Activated CD8-positive, alpha-beta memory T cell treated with anti-CD3 and anti-CD28 coated beads, Interleukin-2, amount 10 ng/mL, durations not matched to agents 7 days and 5 days (primary cell): ENCODE measurements at regions of chr17 and their contacts with region 1.

Region 1: GRCh38 chr17:75012346-75013091 is at the start of gene MRPL58:
- DNase-seq: peak; percentile 92
- ATAC-seq: peak; percentile 95
- H3K4me3 Mint-ChIP-seq: peak within 1 kb of the TSS; percentile 95
- H3K27ac Mint-ChIP-seq: peak within 1 kb of the TSS; percentile 93
- H3K4me1 Mint-ChIP-seq: peaks cover 24% of the 10 kb centered on the region
- H3K27me3 Mint-ChIP-seq: peaks cover 2% of the 10 kb centered on the region
- total RNA-seq, gene MRPL58: 45.9 to 53.1 TPM

Region 2: DNA sequence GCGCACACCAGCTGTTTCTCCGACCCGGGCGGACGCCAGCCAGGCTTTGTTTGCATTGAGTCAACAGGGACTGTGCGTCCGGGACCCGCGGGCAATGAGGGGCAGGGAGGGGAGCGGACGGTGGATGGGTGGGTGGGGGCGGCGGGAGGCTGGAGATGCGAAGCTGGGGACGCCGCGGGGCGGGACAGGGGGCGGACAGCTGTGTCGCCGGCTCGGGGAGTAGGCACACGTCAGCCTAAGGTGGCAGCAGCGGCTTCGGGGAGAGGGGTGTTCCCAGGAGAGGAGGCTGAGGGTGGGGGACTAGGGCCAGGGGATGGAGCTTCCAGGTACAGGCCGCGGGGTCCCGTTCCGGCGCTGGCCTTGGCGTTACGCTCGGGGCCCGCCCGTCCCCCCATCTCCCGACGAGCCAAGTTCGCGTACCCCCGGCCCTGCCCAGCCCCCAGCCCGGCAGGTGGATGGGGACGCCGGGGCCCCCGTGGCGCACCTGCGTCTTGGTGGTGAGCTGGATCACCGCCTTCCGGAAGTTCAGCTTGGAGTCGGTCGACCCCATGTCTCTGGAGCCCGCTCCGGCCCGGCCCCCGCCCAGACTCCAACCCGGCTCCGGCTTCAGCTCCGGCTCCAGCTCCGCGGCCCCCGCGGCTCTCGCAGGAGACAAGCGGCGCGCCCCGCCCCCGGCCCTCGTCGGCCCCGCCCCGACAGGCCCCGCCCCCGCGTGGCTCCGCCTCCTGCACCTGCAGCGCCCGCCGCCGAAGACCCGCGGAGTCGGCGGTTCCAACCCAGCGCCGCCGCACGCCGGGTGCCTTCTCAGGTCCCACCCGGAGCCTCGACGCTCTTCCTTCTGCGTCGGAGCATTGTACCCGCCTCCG is 40.2 kb before region 1 on chr17 and contains the start of gene HID1:
- CTCF ChIA-PET with region 1: interaction called, 15 read pairs
- DNase-seq: peak; percentile 75
- ATAC-seq: peak; percentile 93
- H3K4me3 Mint-ChIP-seq: peak within 1 kb of the TSS; percentile 60
- H3K27ac Mint-ChIP-seq: no peak within 1 kb of the TSS
- H3K4me1 Mint-ChIP-seq: peaks cover 6% of the 10 kb centered on the region
- H3K27me3 Mint-ChIP-seq: peaks cover 36% of the 10 kb centered on the region
- total RNA-seq, gene HID1: not detected

Region 3: GRCh38 chr17:74987418-74987908 is 25.1 kb before region 1 on chr17 and contains the start of gene CDR2L:
- CTCF ChIA-PET with region 1: interaction called, 21 read pairs
- DNase-seq: peak; percentile 92
- ATAC-seq: peak; percentile 98
- H3K4me3 Mint-ChIP-seq: peak within 1 kb of the TSS; percentile 70
- H3K27ac Mint-ChIP-seq: no peak within 1 kb of the TSS
- H3K4me1 Mint-ChIP-seq: peaks cover 13% of the 10 kb centered on the region
- H3K27me3 Mint-ChIP-seq: peaks cover 57% of the 10 kb centered on the region
- total RNA-seq, gene CDR2L: 0.32 to 0.47 TPM

Region 4: DNA sequence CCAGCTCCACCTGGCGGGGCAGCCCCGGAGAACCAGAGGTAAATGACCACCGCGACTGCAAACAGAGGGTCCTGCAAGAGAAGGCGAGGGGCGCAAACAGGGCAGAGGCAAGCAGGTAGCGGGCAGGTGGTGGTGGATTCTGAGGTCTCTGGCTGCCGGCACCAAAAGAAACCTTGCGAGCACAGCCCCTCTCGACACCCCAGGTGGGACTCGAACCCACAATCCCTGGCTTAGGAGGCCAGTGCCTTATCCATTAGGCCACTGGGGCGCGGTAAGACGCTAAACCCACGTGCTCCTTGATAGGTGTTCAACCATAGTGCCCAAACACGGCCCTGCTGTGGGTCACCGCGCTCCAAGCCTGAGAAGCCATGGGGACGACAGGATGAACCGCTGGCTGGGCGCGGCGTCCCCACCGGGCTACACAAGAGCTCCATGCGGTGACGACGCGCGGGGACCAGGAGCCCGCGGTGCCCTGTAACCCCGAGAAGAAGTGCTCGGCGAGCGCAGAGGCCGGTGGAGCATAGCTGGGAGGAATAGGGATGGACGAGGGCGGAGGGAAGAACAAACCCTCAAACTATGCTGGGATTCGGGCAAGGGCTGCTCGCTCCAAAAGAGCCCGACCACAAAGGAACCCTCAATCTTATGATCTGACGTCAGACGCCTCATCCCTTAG is 21.9 kb after region 1 on chr17:
- CTCF ChIA-PET with region 1: interaction called, 26 read pairs
- DNase-seq: peak; percentile 94
- ATAC-seq: peak; percentile 70
- H3K4me3 Mint-ChIP-seq: peak overlapping the region; percentile 91
- H3K27ac Mint-ChIP-seq: peak overlapping the region; percentile 93
- H3K4me1 Mint-ChIP-seq: peaks cover 44% of the 10 kb centered on the region
- H3K27me3 Mint-ChIP-seq: no peaks in the 10 kb centered on the region